Naive thymus-derived CD8-positive, alpha-beta T cell (primary cell): ENCODE measurements at regions of chr17 and their contacts with region 1.

Region 1: GRCh38 chr17:50865984-50866774 is at the start of gene TOB1:
- DNase-seq: peak; percentile 90 to 98 (median 96)
- ATAC-seq: peak; percentile 63 to 66
- H3K4me3 Mint-ChIP-seq: peak within 1 kb of the TSS; percentile 80 to 100 (median 99)
- H3K27ac Mint-ChIP-seq: peak within 1 kb of the TSS; percentile 96 to 100 (median 100)
- H3K4me1 Mint-ChIP-seq: peaks cover 31 to 66% (median 58%) of the 10 kb centered on the region in 4 donors
- H3K27me3 Mint-ChIP-seq: peaks cover 0 to 1% (median 0%) of the 10 kb centered on the region in 5 donors
- polyA plus RNA-seq, gene TOB1: 42.9 to 114 (median 65.1) TPM

Region 2: DNA sequence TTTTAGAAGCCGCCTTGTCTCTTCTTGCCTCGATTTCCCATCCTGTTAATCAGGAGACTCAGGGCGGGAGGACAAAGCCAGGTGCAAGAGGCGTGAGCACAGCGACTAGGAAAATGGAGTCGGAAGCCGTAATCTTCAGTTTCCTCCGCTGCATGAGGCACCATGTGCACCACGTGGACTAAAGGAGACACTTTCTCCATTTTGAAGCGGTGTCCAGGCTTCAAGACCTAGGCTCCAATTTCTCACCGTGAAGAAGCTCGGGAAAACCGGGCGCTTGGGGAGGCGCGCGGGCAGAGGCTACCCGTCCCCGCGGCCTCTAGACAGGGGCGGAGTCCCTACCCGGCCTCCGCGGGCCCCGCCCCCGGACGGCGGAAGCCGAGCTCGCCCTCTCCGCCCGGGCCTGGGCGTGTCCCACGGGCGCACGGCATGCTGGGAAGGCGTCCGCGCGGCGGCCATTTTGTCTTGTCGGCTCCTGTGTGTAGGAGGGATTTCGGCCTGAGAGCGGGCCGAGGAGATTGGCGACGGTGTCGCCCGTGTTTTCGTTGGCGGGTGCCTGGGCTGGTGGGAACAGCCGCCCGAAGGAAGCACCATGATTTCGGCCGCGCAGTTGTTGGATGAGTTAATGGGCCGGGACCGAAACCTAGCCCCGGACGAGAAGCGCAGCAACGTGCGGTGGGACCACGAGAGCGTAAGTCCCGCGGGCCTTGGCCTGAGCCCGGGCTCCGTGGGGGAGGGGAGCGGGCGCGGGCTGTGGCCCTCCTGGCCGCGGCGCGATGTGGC is 146.8 kb before region 1 on chr17 and contains the start of gene LUC7L3:
- POLR2A ChIA-PET with region 1: interaction called, 10 read pairs
- DNase-seq: peak; percentile 83 to 95 (median 92)
- ATAC-seq: peak; percentile 91 to 94
- H3K4me3 Mint-ChIP-seq: peak within 1 kb of the TSS; percentile 86 to 99 (median 96)
- H3K27ac Mint-ChIP-seq: peak within 1 kb of the TSS; percentile 95 to 100 (median 99)
- H3K4me1 Mint-ChIP-seq: peaks cover 12 to 41% (median 34%) of the 10 kb centered on the region in 4 donors
- H3K27me3 Mint-ChIP-seq: no peaks in the 10 kb centered on the region
- polyA plus RNA-seq, gene LUC7L3: 41.6 to 58.4 (median 46.0) TPM

Region 3: DNA sequence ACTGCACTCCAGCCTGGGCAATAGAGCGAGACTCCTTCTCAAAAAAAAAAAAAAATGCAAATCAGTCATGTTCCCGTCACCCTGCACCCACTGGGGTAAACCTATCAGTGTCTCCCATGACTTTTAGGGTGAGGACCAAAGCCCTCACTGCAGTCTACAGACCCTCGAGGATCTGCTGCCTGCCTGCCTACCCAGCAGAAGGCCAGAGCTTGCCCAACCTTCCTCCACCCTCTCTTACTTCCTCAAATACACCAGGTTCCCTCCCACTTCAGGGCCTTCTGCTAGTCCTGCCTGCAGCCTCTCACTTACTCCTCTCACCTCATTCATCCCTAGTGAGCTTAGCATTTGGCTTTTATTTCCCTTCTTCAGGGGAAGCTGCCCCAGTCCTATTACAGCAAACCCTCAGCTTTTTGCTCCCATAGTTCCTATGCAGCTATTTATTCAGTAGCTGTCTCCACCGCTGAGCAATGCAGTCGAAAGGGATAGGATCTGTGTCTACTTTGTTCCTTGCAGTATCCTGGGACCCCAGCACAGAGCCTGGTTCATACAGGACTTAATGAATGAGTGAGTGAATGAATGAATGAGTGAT is 17.8 kb after region 1 on chr17:
- POLR2A ChIA-PET with region 1: interaction called, 74 read pairs
- DNase-seq: no peak
- ATAC-seq: peak in 1 of 2 donors; percentile 25
- H3K4me3 Mint-ChIP-seq: peak overlapping the region in 1 of 10 donors; percentile 31
- H3K27ac Mint-ChIP-seq: peak overlapping the region in 9 of 10 donors; percentile 19 to 92 (median 76)
- H3K4me1 Mint-ChIP-seq: peaks cover 21 to 46% (median 35%) of the 10 kb centered on the region in 4 donors
- H3K27me3 Mint-ChIP-seq: no peaks in the 10 kb centered on the region

Region 4: DNA sequence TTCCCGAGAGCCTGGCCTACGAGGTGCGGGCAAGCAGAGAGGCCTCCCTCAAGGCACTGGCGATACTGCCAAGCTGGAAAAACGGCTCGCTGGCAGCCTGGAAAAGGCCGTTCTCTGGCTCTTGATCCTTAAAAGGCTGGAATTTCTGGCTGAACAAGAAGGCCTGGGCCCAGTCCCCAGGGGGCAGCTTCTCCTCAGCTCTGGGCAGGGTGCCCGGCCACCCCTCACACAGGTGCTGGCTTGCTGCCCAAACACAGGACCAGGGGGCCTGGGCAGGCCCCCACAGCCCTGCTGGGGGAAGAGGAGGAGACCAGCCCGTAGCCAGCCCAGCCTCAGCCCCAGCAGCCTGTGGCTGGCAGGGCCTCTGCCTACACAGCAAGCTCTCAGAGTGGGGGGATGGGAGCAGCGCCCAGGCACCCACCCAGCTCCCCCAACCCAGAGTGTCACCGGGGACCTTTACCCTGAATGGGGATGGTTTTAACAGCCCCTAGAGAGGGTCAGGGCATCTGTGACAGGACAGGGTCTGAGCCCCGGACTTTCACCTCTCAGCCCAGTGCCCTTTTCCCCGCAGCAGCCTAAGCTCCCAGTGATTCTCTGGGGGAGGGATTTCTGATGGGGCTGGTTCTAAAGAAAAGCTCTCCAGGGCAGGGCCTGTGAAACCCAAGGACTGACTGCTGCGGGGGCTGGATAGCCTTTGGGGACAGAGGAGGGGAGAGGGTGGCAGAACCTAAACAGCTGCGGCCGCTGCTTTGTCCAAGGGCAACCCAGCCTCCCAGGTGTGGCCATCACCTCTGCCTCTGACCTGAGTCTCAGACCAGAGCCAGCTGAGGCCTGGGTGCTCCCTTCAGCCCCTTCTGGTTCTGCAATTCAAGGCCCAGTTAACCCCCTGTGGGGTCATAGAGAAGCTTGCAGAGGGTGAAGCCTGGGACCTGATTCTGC is 38.6 kb after region 1 on chr17:
- POLR2A ChIA-PET with region 1: interaction called, 544 read pairs
- DNase-seq: no peak
- ATAC-seq: no peak
- H3K4me3 Mint-ChIP-seq: peak overlapping the region in 5 of 10 donors; percentile 3 to 66 (median 49)
- H3K27ac Mint-ChIP-seq: peak overlapping the region; percentile 67 to 92 (median 86)
- H3K4me1 Mint-ChIP-seq: peaks cover 50 to 72% (median 70%) of the 10 kb centered on the region in 4 donors
- H3K27me3 Mint-ChIP-seq: no peaks in the 10 kb centered on the region

Region 5: GRCh38 chr17:50931144-50931908 is 65.1 kb after region 1 on chr17:
- POLR2A ChIA-PET with region 1: interaction called, 544 read pairs
- DNase-seq: peak; percentile 25 to 77 (median 56)
- ATAC-seq: peak; percentile 82 to 86
- H3K4me3 Mint-ChIP-seq: peak overlapping the region; percentile 80 to 98 (median 88)
- H3K27ac Mint-ChIP-seq: peak overlapping the region; percentile 94 to 99 (median 98)
- H3K4me1 Mint-ChIP-seq: peaks cover 27 to 56% (median 50%) of the 10 kb centered on the region in 4 donors
- H3K27me3 Mint-ChIP-seq: peaks cover 0 to 5% (median 0%) of the 10 kb centered on the region in 5 donors

Region 6: GRCh38 chr17:50956750-50957523 is 90.8 kb after region 1 on chr17:
- POLR2A ChIA-PET with region 1: interaction called, 535 read pairs
- DNase-seq: peak; percentile 44 to 83 (median 64)
- ATAC-seq: peak; percentile 95 to 96
- H3K4me3 Mint-ChIP-seq: no peak overlapping the region
- H3K27ac Mint-ChIP-seq: peak overlapping the region in 6 of 10 donors; percentile 12 to 87 (median 78)
- H3K4me1 Mint-ChIP-seq: peaks cover 2 to 6% (median 3%) of the 10 kb centered on the region in 4 donors
- H3K27me3 Mint-ChIP-seq: no peaks in the 10 kb centered on the region